Panc1 (cell line): ENCODE measurements at regions of chr2 and their contacts with region 1.

Region 1: GRCh38 chr2:221075203-221075602 is 496.9 kb downstream of the EPHA4 start:
- DNase-seq: no peak
- ATAC-seq: no peak
- H3K4me3 ChIP-seq: no peak overlapping the region
- H3K27ac ChIP-seq: no peak overlapping the region
- H3K4me1 ChIP-seq: no peaks in the 10 kb centered on the region
- H3K27me3 ChIP-seq: no peaks in the 10 kb centered on the region
- CTCF ChIP-seq: no peak

Region 2: GRCh38 chr2:220946552-220946951 is 128.7 kb before region 1 on chr2:
- CTCF ChIA-PET with region 1: interaction called, 11 read pairs
- POLR2A ChIA-PET with region 1: no interaction called
- in situ Hi-C with region 1: no loop called
- intact Hi-C with region 1: no loop called
- DNase-seq: no peak
- ATAC-seq: no peak
- H3K4me3 ChIP-seq: no peak overlapping the region
- H3K27ac ChIP-seq: no peak overlapping the region
- H3K4me1 ChIP-seq: no peaks in the 10 kb centered on the region
- H3K27me3 ChIP-seq: no peaks in the 10 kb centered on the region
- CTCF ChIP-seq: no peak

Region 3: DNA sequence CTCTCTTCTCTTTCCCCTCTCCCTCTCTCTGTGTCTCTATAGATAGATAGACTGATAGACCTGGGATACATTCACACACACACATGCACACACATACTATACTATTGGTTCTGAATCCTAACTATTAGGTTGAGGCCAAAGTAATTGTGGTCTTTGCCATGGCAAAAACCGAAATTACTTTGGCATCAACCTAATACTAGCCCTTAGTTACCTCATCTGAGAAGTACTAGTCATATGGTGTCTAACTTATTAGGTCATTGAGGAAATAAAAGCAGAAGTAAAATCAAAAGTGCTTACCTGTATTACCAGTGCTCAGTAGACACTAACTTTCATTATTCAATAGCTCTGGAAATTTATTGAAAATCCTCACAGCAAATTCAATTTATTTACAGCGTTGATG is 45.4 kb after region 1 on chr2:
- CTCF ChIA-PET with region 1: no interaction called
- POLR2A ChIA-PET with region 1: no interaction called
- in situ Hi-C with region 1: no loop called
- intact Hi-C with region 1: no loop called
- DNase-seq: no peak
- ATAC-seq: no peak
- H3K4me3 ChIP-seq: no peak overlapping the region
- H3K27ac ChIP-seq: no peak overlapping the region
- H3K4me1 ChIP-seq: no peaks in the 10 kb centered on the region
- H3K27me3 ChIP-seq: no peaks in the 10 kb centered on the region
- CTCF ChIP-seq: no peak